IMR-90 (cell line): ENCODE measurements at regions of chr14 and their contacts with region 1.

Region 1: GRCh38 chr14:26454105-26454504 is 143.7 kb downstream of the NOVA1 start:
- DNase-seq: no peak
- ATAC-seq: no peak
- H3K4me3 ChIP-seq: no peak overlapping the region
- H3K27ac ChIP-seq: no peak overlapping the region
- H3K4me1 ChIP-seq: no peaks in the 10 kb centered on the region
- H3K27me3 ChIP-seq: no peaks in the 10 kb centered on the region
- CTCF ChIP-seq: no peak
- POLR2A ChIP-seq: no peak
- RAD21 ChIP-seq: no peak

Region 2: DNA sequence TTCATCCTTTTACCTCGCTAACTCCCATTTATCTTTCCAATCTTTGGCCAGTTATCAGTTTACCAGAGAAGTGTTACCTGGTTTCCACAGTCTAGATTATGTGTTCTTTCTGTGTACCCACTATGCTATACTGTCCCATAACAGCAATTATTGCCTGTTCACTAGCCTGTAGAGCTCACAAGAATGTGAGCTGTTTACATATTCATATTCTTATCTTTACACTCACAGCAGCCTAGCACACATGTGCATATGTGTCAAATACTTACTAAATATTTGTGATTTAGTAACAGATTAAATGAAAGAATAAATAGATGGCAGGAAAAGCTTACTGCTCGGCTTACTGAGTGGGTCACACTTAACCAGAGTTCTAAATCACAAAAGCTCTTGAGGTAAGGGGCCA is 45.9 kb after region 1 on chr14:
- CTCF ChIA-PET with region 1: no interaction called
- POLR2A ChIA-PET with region 1: no interaction called
- dilution Hi-C with region 1: no loop called
- in situ Hi-C with region 1: no loop called
- intact Hi-C with region 1: loop called (anchors 1 kb)
- DNase-seq: no peak
- ATAC-seq: no peak
- H3K4me3 ChIP-seq: no peak overlapping the region
- H3K27ac ChIP-seq: no peak overlapping the region
- H3K4me1 ChIP-seq: no peaks in the 10 kb centered on the region
- H3K27me3 ChIP-seq: no peaks in the 10 kb centered on the region
- CTCF ChIP-seq: no peak
- POLR2A ChIP-seq: no peak
- RAD21 ChIP-seq: no peak